ENCODE measurements at regions of chr11 and their contacts with region 1.

Region 1: GRCh38 chr11:66729447-66729846 is 431 bp upstream of the SPTBN2 start:
- DNase-seq: no peak
- H3K4me3 ChIP-seq: no peak overlapping the region
- H3K27ac ChIP-seq: no peak overlapping the region
- H3K4me1 ChIP-seq: no peaks in the 10 kb centered on the region
- H3K27me3 ChIP-seq: peaks cover 14% of the 10 kb centered on the region
- CTCF ChIP-seq: no peak

Region 2: GRCh38 chr11:66100272-66101065 is 629.0 kb before region 1 on chr11:
- CTCF ChIA-PET with region 1: no interaction called
- POLR2A ChIA-PET with region 1: no interaction called
- intact Hi-C with region 1: no loop called
- DNase-seq: no peak
- H3K4me3 ChIP-seq: no peak overlapping the region
- H3K27ac ChIP-seq: peak overlapping the region; percentile 10
- H3K4me1 ChIP-seq: peaks cover 20% of the 10 kb centered on the region
- H3K27me3 ChIP-seq: no peaks in the 10 kb centered on the region
- CTCF ChIP-seq: no peak

Region 3: GRCh38 chr11:66970808-66971442 is 241.5 kb after region 1 on chr11:
- CTCF ChIA-PET with region 1: no interaction called
- POLR2A ChIA-PET with region 1: no interaction called
- intact Hi-C with region 1: no loop called
- DNase-seq: peak; percentile 76
- H3K4me3 ChIP-seq: no peak overlapping the region
- H3K27ac ChIP-seq: no peak overlapping the region
- H3K4me1 ChIP-seq: no peaks in the 10 kb centered on the region
- H3K27me3 ChIP-seq: no peaks in the 10 kb centered on the region
- CTCF ChIP-seq: no peak

Region 4: GRCh38 chr11:67032830-67033555 is 303.5 kb after region 1 on chr11:
- CTCF ChIA-PET with region 1: no interaction called
- POLR2A ChIA-PET with region 1: interaction called, 22 read pairs
- intact Hi-C with region 1: no loop called
- DNase-seq: no peak
- H3K4me3 ChIP-seq: no peak overlapping the region
- H3K27ac ChIP-seq: no peak overlapping the region
- H3K4me1 ChIP-seq: peaks cover 20% of the 10 kb centered on the region
- H3K27me3 ChIP-seq: no peaks in the 10 kb centered on the region
- CTCF ChIP-seq: no peak

Measured in A673 (cell line).